CD14-positive monocyte (primary cell): ENCODE measurements at regions of chr9 and their contacts with region 1.

Region 1: GRCh38 chr9:107282753-107283625 is at the start of gene RAD23B:
- DNase-seq: peak; percentile 98 to 99 (median 98)
- H3K4me3 ChIP-seq: peak within 1 kb of the TSS; percentile 83 to 90 (median 89)
- H3K4me3 Mint-ChIP-seq: peak within 1 kb of the TSS; percentile 95 to 96
- H3K27ac ChIP-seq: peak within 1 kb of the TSS; percentile 91 to 96
- H3K27ac Mint-ChIP-seq: peak within 1 kb of the TSS; percentile 90 to 97 (median 94)
- H3K4me1 ChIP-seq: peaks cover 29 to 59% of the 10 kb centered on the region in 2 donors
- H3K4me1 Mint-ChIP-seq: peaks cover 51% of the 10 kb centered on the region
- H3K27me3 ChIP-seq: no peaks in the 10 kb centered on the region
- H3K27me3 Mint-ChIP-seq: peaks cover 1 to 7% (median 2%) of the 10 kb centered on the region in 3 donors
- CTCF ChIP-seq: no peak
- polyA plus RNA-seq, gene RAD23B: 21.6 to 50.0 (median 24.7) TPM

Region 2: DNA sequence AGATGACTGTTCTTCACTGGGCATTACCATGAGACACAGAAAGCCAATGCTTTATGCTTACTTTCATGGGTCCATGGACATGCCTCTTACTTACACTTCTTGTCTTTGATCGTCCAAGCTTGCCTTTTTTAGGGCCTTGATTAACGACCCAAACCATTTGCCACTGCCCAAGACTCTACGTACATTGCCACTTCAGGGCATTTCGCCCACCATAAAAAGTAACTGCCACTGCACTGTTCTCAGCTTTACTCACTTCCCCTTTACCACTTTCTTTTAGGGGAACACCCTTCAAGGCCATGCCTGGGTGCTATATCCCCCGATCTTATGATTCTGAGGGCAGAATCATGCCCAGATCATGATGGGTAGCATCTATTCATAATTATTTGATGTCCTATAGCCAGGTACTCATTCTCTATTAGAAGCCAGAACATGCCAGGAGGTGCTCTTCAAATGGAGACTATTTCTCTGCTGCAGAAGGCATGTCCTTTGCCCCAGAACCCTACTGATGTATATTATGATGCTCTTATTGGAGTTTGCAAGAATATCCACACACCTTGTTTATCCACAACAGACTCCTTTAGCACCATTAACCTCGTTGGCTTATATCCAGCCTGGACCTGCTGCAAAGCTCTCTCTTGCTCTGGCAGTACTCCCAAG is 64.0 kb before region 1 on chr9:
- intact Hi-C with region 1: loop called in 1 of 2 experiments (anchors 5 kb)
- DNase-seq: peak in 2 of 3 donors; percentile 2 to 24
- H3K4me3 ChIP-seq: no peak overlapping the region
- H3K4me3 Mint-ChIP-seq: no peak overlapping the region
- H3K27ac ChIP-seq: no peak overlapping the region
- H3K27ac Mint-ChIP-seq: no peak overlapping the region
- H3K4me1 ChIP-seq: peaks cover under 1 to 9% of the 10 kb centered on the region in 2 donors
- H3K4me1 Mint-ChIP-seq: peaks cover 20% of the 10 kb centered on the region
- H3K27me3 ChIP-seq: no peaks in the 10 kb centered on the region
- H3K27me3 Mint-ChIP-seq: peaks cover 3 to 8% (median 5%) of the 10 kb centered on the region in 3 donors
- CTCF ChIP-seq: no peak

Region 3: DNA sequence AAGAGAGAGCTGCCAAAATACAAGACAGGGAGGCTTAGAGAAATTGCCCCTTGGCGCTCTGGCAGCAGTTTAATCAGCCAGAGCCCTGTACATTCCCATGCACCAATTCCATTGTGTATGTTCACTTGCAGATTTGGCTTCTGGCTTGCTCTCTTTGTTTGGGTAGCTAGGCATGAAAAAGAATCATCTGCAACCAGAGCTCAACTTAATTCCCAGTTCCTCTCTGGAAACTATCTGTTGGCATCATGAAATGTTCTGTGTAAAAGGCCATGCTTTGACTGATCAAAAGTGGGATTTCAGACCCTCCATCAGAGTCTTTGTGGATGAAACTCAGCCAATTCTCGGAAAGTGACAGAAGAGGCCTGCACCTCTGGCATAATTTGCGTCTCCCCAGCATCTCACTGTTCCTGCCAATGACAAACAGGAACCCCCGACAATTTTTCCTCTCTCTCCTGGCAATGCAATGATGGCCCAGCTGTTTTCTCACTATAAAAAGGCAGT is 53.7 kb before region 1 on chr9:
- intact Hi-C with region 1: no loop called
- DNase-seq: no peak
- H3K4me3 ChIP-seq: no peak overlapping the region
- H3K4me3 Mint-ChIP-seq: no peak overlapping the region
- H3K27ac ChIP-seq: no peak overlapping the region
- H3K27ac Mint-ChIP-seq: no peak overlapping the region
- H3K4me1 ChIP-seq: no peaks in the 10 kb centered on the region
- H3K4me1 Mint-ChIP-seq: no peaks in the 10 kb centered on the region
- H3K27me3 ChIP-seq: peaks cover 4 to 14% of the 10 kb centered on the region in 2 donors
- H3K27me3 Mint-ChIP-seq: peaks cover 13 to 26% (median 16%) of the 10 kb centered on the region in 3 donors
- CTCF ChIP-seq: no peak